OCI-LY7 (cell line): ENCODE measurements at regions of chr5 and their contacts with region 1.

Region 1: GRCh38 chr5:134904630-134905245 is at the start of gene PCBD2:
- DNase-seq: peak; percentile 96
- H3K4me3 ChIP-seq: peak within 1 kb of the TSS; percentile 82
- H3K27ac ChIP-seq: peak within 1 kb of the TSS; percentile 93
- H3K4me1 ChIP-seq: peaks cover 41% of the 10 kb centered on the region
- CTCF ChIP-seq: peak; percentile 84
- total RNA-seq, gene PCBD2: 9.4 and 12.2 TPM in 2 replicates

Region 2: GRCh38 chr5:134586866-134587524 is 317.7 kb before region 1 on chr5:
- CTCF ChIA-PET with region 1: no interaction called
- POLR2A ChIA-PET with region 1: no interaction called
- intact Hi-C with region 1: loop called (anchors 5 kb)
- DNase-seq: peak; percentile 87
- H3K4me3 ChIP-seq: no peak overlapping the region
- H3K27ac ChIP-seq: no peak overlapping the region
- H3K4me1 ChIP-seq: peaks cover 6% of the 10 kb centered on the region
- CTCF ChIP-seq: peak; percentile 99

Region 3: GRCh38 chr5:134758504-134759341 is 146.0 kb before region 1 on chr5 and contains the start of gene DDX46:
- CTCF ChIA-PET with region 1: no interaction called
- POLR2A ChIA-PET with region 1: interaction called, 5 read pairs
- intact Hi-C with region 1: loop called (anchors 1 kb)
- DNase-seq: peak; percentile 96
- H3K4me3 ChIP-seq: peak within 1 kb of the TSS; percentile 90
- H3K27ac ChIP-seq: peak within 1 kb of the TSS; percentile 48
- H3K4me1 ChIP-seq: peaks cover 31% of the 10 kb centered on the region
- CTCF ChIP-seq: peak; percentile 84
- total RNA-seq, gene DDX46: 44.5 and 47.1 TPM in 2 replicates

Region 4: DNA sequence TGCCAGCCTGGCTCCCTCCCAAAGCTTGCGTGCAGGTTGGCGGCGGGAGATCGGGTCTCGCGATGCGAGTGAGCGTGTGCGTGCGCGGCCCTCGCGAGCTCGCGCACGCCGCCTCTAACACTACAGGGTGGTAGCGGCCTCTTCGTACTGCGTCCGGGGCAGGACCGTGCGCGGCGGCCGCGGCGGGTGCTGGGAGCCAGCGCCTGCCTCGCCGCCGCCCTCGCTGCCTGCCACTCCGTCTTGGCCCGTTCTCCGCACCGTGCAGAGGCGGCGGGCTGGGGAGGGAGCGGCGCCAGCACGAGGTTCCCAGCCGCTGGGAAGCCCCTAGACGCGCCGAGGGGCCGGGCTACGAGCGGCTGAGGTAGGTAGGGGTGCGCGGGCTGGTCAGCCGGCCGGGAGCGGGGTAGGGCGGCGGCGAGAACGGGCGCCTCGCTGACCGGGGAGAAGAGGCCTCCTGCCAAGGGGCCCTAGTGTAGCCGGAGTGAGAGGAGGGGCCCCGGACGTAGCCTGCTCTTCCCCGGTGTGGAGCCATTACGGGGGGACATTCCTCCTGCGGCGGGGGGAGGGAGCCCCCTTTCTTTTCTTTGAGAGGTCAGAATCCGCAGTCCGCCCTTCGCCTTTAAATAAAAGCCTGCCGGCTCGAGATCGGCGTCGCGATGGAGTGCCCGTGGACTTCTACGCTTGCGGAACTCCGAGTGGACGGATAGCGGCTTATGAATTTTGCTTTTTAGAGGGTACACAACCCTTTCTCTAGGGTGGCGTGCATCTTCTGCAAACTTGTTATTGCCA is 58.7 kb before region 1 on chr5 and contains the start of gene C5orf24:
- CTCF ChIA-PET with region 1: no interaction called
- POLR2A ChIA-PET with region 1: interaction called, 6 read pairs
- intact Hi-C with region 1: loop called (anchors 1 kb)
- DNase-seq: peak; percentile 96
- H3K4me3 ChIP-seq: peak within 1 kb of the TSS; percentile 79
- H3K27ac ChIP-seq: peak within 1 kb of the TSS; percentile 80
- H3K4me1 ChIP-seq: peaks cover 16% of the 10 kb centered on the region
- CTCF ChIP-seq: 0 out of 2 replicates have a peak, but pooled peaks have one; percentile 8
- total RNA-seq, gene C5orf24: 28.4 and 36.7 TPM in 2 replicates

Region 5: DNA sequence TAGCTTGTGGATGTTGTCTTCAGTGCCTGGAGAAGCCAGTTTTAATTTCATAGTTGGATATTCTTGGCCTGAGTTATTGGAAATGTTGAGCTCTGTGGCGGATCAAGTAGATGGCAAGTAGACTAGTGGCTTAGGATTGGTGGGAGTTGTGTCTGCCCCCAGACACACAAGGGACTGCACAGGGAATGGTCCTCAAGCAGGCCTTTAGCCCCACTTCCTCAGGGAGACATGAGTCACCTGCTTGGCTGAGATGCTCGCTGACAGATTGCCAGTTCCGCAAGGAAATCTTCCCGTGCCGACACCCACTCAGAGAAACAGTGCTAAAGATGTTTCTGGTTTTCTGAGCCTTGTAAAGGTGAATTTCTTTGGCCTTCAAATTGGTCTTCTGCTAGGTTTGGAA is 44.2 kb after region 1 on chr5:
- CTCF ChIA-PET with region 1: no interaction called
- POLR2A ChIA-PET with region 1: no interaction called
- intact Hi-C with region 1: no loop called
- DNase-seq: no peak
- H3K4me3 ChIP-seq: no peak overlapping the region
- H3K27ac ChIP-seq: no peak overlapping the region
- H3K4me1 ChIP-seq: no peaks in the 10 kb centered on the region
- CTCF ChIP-seq: no peak

Region 6: GRCh38 chr5:135034236-135034962 is 129.7 kb after region 1 on chr5:
- CTCF ChIA-PET with region 1: no interaction called
- POLR2A ChIA-PET with region 1: interaction called, 3 read pairs
- intact Hi-C with region 1: loop called (anchors 5 kb)
- DNase-seq: peak; percentile 90
- H3K4me3 ChIP-seq: peak overlapping the region; percentile 84
- H3K27ac ChIP-seq: peak overlapping the region; percentile 80
- H3K4me1 ChIP-seq: peaks cover 50% of the 10 kb centered on the region
- CTCF ChIP-seq: no peak